OCI-LY7 (cell line): ENCODE measurements at regions of chr9 and their contacts with region 1.

Region 1: DNA sequence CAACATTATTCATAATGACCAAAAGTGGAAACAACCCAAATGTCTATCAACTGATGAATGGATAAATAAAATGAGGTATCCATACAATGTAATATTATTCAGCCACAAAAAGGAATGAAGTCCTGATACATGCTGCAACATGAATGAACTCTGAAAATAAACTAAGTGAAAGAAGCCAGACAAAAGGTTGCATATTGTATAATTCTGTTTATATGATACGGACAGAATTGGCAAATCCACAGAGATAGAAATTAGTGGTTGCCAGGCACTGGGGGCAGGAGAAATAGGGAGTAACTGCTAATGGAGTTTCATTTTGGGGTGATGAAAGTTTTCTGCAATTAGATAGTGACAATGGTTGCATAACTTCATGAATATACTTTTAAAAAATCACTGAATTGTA is 47.0 kb downstream of the KIF24 start:
- DNase-seq: no peak
- H3K4me3 ChIP-seq: no peak overlapping the region
- H3K27ac ChIP-seq: no peak overlapping the region
- H3K4me1 ChIP-seq: no peaks in the 10 kb centered on the region
- CTCF ChIP-seq: no peak

Region 2: GRCh38 chr9:34318163-34318790 is 36.2 kb after region 1 on chr9:
- CTCF ChIA-PET with region 1: no interaction called
- POLR2A ChIA-PET with region 1: no interaction called
- intact Hi-C with region 1: loop called (anchors 5 kb)
- DNase-seq: no peak
- H3K4me3 ChIP-seq: no peak overlapping the region
- H3K27ac ChIP-seq: no peak overlapping the region
- H3K4me1 ChIP-seq: peaks cover 2% of the 10 kb centered on the region
- CTCF ChIP-seq: no peak